Esophagus muscularis mucosa (tissue), 4 donors: ENCODE measurements at regions of chrX and their contacts with region 1.

Region 1: GRCh38 chrX:17590892-17591740 is 146.2 kb upstream of the SCML1 start:
- DNase-seq: no peak
- H3K4me3 ChIP-seq: peak overlapping the region; percentile 18 to 29 (median 25)
- H3K27ac ChIP-seq: peak overlapping the region; percentile 28 to 69 (median 46)
- H3K4me1 ChIP-seq: peaks cover 0 to 33% (median 19%) of the 10 kb centered on the region in 4 donors
- H3K27me3 ChIP-seq: no peaks in the 10 kb centered on the region
- CTCF ChIP-seq: peak; percentile 60 to 74 (median 63)
- EP300 ChIP-seq: no peak
- POLR2A ChIP-seq: no peak

Region 2: DNA sequence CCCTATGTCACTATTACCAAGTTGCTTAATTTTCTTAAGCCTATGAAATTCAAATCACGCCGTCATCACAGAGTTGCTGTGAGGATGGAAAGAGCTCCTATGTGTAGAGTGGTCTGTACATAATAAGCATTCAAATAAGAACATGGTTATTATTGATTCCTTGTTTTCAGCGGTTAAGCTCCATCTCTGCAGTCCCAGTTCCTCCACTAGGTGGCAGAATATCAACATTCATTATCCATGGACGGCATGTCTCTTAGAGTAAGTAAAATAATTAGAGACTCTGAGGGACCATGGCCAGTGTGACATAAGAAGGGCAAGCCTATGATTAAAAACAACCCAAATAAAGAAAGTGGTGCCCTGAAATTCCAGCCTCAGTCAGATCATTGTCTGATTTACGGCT is 348.6 kb before region 1 on chrX:
- intact Hi-C with region 1: loop called (anchors 5 kb)
- DNase-seq: no peak
- H3K4me3 ChIP-seq: no peak overlapping the region
- H3K27ac ChIP-seq: no peak overlapping the region
- H3K4me1 ChIP-seq: no peaks in the 10 kb centered on the region
- H3K27me3 ChIP-seq: no peaks in the 10 kb centered on the region
- CTCF ChIP-seq: peak; percentile 69 to 75 (median 74)
- EP300 ChIP-seq: no peak
- POLR2A ChIP-seq: no peak

Region 3: DNA sequence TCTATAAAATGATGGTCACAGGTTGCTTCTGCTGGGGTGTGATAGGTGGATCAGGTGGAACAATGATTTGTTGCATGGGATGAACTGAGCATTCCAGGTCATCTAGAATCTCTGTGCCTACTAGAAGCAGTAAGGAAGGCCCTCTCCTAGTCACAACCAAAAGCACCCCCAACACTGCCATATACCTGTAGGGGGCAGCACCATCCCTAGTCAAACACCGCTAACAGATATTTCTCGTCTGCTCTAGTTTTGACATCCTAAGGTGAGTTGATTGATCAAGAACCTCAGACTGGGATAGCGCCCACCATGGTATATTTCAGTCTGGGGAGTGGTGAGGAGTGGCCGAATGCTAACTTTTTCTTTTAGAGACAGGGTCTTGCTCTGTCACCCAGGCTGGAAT is 55.9 kb before region 1 on chrX:
- intact Hi-C with region 1: loop called (anchors 5 kb)
- DNase-seq: no peak
- H3K4me3 ChIP-seq: no peak overlapping the region
- H3K27ac ChIP-seq: no peak overlapping the region
- H3K4me1 ChIP-seq: no peaks in the 10 kb centered on the region
- H3K27me3 ChIP-seq: no peaks in the 10 kb centered on the region
- CTCF ChIP-seq: peak; percentile 22 to 47 (median 30)
- EP300 ChIP-seq: no peak
- POLR2A ChIP-seq: no peak

Region 4: GRCh38 chrX:17547658-17548057 is 43.5 kb before region 1 on chrX:
- intact Hi-C with region 1: no loop called
- DNase-seq: no peak
- H3K4me3 ChIP-seq: no peak overlapping the region
- H3K27ac ChIP-seq: no peak overlapping the region
- H3K4me1 ChIP-seq: peaks cover 0 to 22% (median 5%) of the 10 kb centered on the region in 4 donors
- H3K27me3 ChIP-seq: no peaks in the 10 kb centered on the region
- CTCF ChIP-seq: no peak
- EP300 ChIP-seq: no peak
- POLR2A ChIP-seq: no peak

Region 5: DNA sequence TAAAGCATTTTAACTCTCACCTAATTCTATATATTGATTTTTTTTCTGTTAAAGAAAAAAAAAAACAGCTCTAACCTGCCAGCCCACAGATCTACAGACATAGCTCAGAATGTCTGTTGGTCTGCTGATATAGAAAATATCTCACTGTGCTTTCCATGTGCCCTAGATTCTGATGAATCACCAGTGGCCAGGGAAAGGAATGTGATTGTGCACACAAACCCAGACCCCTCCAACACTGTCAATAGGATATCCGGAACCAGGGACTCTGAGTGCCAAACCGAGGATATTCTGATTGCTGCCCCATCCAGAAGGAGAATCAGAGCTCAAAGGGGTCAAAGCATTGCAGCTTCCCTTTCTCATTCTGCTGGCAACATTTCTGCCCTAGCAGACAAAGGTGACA is 134.1 kb after region 1 on chrX:
- intact Hi-C with region 1: no loop called
- DNase-seq: no peak
- H3K4me3 ChIP-seq: no peak overlapping the region
- H3K27ac ChIP-seq: no peak overlapping the region
- H3K4me1 ChIP-seq: peaks cover 0 to 2% (median 0%) of the 10 kb centered on the region in 4 donors
- H3K27me3 ChIP-seq: no peaks in the 10 kb centered on the region
- CTCF ChIP-seq: no peak
- EP300 ChIP-seq: no peak
- POLR2A ChIP-seq: no peak